Activated T-helper 1 cell treated with anti-CD3 and anti-CD28 coated beads, Interleukin-12 subunit alpha, Interleukin-12 subunit beta, Interleukin-2, Interleukin-4 antibody, amounts not matched to agents 30 ng/mL and 10 ng/mL and 1 ng/mL, durations not matched to agents 14 hours and 24 hours and 36 hours (primary cell): ENCODE measurements at regions of chr2 and their contacts with region 1.

Region 1: GRCh38 chr2:231563378-231563961 is 29.2 kb upstream of the TEX44 start:
- DNase-seq: peak; percentile 11
- H3K4me3 Mint-ChIP-seq: no peak overlapping the region
- H3K27ac Mint-ChIP-seq: no peak overlapping the region
- H3K4me1 Mint-ChIP-seq: peaks cover 2% of the 10 kb centered on the region
- H3K27me3 Mint-ChIP-seq: no peaks in the 10 kb centered on the region

Region 2: GRCh38 chr2:231604685-231605606 is 41.5 kb after region 1 on chr2:
- intact Hi-C with region 1: loop called (anchors 1 kb)
- DNase-seq: peak; percentile 95
- H3K4me3 Mint-ChIP-seq: peak overlapping the region; percentile 60
- H3K27ac Mint-ChIP-seq: peak overlapping the region; percentile 76
- H3K4me1 Mint-ChIP-seq: peaks cover 19% of the 10 kb centered on the region
- H3K27me3 Mint-ChIP-seq: peaks cover 15% of the 10 kb centered on the region